ENCODE measurements at regions of chr11 and their contacts with region 1.

Region 1: DNA sequence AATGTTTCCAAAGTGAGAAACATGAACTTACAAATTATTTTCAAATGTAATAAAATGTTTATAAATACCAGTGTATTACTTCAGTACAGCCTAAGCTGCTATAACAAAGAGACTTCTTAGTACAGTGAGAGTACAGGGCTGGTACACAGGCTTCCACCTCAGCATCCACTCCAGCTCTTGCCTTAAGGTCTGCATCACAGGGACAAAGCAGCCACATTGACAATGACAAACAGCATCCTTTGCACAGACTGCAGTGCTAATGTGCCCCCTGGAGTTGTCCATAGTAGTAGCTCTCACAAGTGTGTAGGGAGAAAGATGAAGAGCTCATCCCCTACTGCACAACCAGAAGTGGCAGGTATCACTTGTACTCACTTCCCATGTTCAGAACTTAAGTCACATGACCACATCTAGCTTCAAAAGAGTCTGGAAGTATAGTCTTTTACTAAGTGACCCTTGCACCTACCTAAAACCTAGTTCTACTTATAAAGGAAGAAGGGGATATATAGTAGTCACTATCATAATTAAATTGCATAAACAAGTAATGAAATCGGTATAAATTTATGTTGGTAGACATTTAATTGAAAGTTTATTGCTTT is 10.7 kb upstream of the LIPT2 start:
- DNase-seq: no peak
- H3K4me3 Mint-ChIP-seq: peak overlapping the region; percentile 47
- H3K27ac Mint-ChIP-seq: peak overlapping the region; percentile 97
- H3K4me1 Mint-ChIP-seq: peaks cover 11% of the 10 kb centered on the region
- H3K27me3 Mint-ChIP-seq: no peaks in the 10 kb centered on the region
- CTCF ChIP-seq: no peak

Region 2: GRCh38 chr11:74492974-74493790 is 11.0 kb before region 1 on chr11 and contains the start of gene LIPT2:
- CTCF ChIA-PET with region 1: interaction called, 8 read pairs
- intact Hi-C with region 1: loop called (anchors 1 kb)
- DNase-seq: peak; percentile 98
- H3K4me3 Mint-ChIP-seq: peak within 1 kb of the TSS; percentile 67
- H3K27ac Mint-ChIP-seq: peak within 1 kb of the TSS; percentile 90
- H3K4me1 Mint-ChIP-seq: peaks cover 30% of the 10 kb centered on the region
- H3K27me3 Mint-ChIP-seq: no peaks in the 10 kb centered on the region
- CTCF ChIP-seq: no peak
- total RNA-seq, gene LIPT2: 7.8 and 10.9 TPM in 2 replicates

Region 3: GRCh38 chr11:74546724-74547123 is 42.5 kb after region 1 on chr11:
- CTCF ChIA-PET with region 1: interaction called, 3 read pairs
- intact Hi-C with region 1: loop called (anchors 5 kb)
- DNase-seq: peak; percentile 85
- H3K4me3 Mint-ChIP-seq: peak overlapping the region; percentile 22
- H3K27ac Mint-ChIP-seq: peak overlapping the region; percentile 17
- H3K4me1 Mint-ChIP-seq: peaks cover 40% of the 10 kb centered on the region
- H3K27me3 Mint-ChIP-seq: no peaks in the 10 kb centered on the region
- CTCF ChIP-seq: no peak